Colonic mucosa (tissue), 4 donors: ENCODE measurements at regions of chr17 and their contacts with region 1.

Region 1: GRCh38 chr17:78128551-78129350 is at the start of gene TMC6:
- DNase-seq: peak; percentile 83
- H3K4me3 ChIP-seq: peak within 1 kb of the TSS; percentile 93
- H3K27ac ChIP-seq: peak within 1 kb of the TSS; percentile 92
- H3K4me1 ChIP-seq: peaks cover 31% of the 10 kb centered on the region
- H3K27me3 ChIP-seq: no peaks in the 10 kb centered on the region
- CTCF ChIP-seq: no peak
- total RNA-seq, gene TMC6: 108 to 159 TPM

Region 2: GRCh38 chr17:77863814-77864161 is 265.0 kb before region 1 on chr17:
- intact Hi-C with region 1: no loop called
- DNase-seq: peak; percentile 80
- H3K4me3 ChIP-seq: no peak overlapping the region
- H3K27ac ChIP-seq: peak overlapping the region; percentile 67
- H3K4me1 ChIP-seq: peaks cover 13% of the 10 kb centered on the region
- H3K27me3 ChIP-seq: no peaks in the 10 kb centered on the region
- CTCF ChIP-seq: no peak

Region 3: GRCh38 chr17:78032166-78032565 is 96.6 kb before region 1 on chr17:
- intact Hi-C with region 1: no loop called
- DNase-seq: no peak
- H3K4me3 ChIP-seq: no peak overlapping the region
- H3K27ac ChIP-seq: no peak overlapping the region
- H3K4me1 ChIP-seq: no peaks in the 10 kb centered on the region
- H3K27me3 ChIP-seq: no peaks in the 10 kb centered on the region
- CTCF ChIP-seq: no peak

Region 4: DNA sequence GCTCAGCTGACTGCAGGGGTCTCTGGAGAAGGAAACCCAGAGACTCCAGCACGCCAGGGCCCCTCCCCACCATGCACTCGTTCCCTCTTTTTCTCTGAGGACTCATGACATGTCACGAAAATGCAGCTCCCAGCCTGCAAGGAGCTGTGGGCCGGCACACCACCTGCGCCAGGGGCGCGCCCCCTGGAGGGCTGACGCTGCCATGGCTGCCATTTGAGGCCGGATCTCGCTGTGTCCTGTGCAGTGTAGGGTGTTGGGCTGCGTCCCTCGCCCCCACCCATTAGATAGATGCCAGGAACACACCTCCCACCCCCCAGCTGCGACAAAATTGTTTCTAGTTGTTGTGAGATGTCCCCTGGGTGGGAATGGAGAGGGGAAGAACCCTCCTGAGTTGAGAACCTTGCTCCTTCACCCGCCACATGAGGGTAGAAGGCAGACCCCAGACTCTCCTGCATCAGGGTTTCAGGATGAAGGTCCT is 47.8 kb after region 1 on chr17:
- intact Hi-C with region 1: loop called (anchors 5 kb)
- DNase-seq: peak; percentile 84
- H3K4me3 ChIP-seq: no peak overlapping the region
- H3K27ac ChIP-seq: peak overlapping the region; percentile 28
- H3K4me1 ChIP-seq: peaks cover 53% of the 10 kb centered on the region
- H3K27me3 ChIP-seq: no peaks in the 10 kb centered on the region
- CTCF ChIP-seq: peak; percentile 96

Region 5: DNA sequence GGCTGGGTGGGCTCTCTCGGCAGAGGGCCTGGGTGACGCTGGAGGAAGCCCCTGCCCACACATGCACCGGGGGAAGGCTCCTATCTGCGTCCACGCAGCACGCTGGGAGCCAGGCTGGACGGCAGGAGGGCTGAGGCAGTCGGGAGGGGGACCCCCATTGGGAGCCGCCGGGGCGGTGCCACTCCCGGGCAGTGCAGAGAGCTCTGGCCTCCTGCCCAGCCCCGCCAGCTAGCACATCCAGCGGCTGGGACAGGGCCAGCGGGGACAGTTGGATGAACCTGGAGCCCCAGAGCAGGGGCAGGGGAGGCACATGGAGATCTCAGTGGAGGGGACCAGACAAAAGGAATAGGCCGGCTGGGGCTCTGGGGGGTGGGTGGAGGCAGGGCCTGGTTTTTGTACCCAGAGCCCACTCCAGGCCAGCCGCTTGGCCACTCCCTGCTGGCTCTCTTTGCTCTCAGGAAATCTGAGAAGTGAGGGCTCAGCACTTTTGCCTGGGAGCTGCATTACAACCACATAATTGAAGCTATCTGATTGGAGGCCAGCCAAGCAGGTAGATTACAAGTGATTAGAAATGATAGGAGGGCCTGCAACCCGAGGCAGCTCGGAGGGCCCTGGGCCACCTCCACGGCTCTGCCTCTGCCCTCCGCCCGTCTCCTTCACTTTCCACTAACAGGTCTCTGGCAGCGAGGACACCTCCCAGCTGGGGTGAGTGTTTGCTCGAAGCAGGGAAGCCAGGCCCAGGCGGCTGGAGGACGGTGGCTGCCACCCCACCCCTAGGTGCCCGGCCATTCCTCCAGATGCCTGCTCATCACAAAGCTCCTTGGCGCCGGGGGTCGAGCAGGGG is 985.9 kb after region 1 on chr17:
- intact Hi-C with region 1: no loop called
- DNase-seq: peak; percentile 70
- H3K4me3 ChIP-seq: no peak overlapping the region
- H3K27ac ChIP-seq: no peak overlapping the region
- H3K4me1 ChIP-seq: peaks cover 3% of the 10 kb centered on the region
- H3K27me3 ChIP-seq: no peaks in the 10 kb centered on the region
- CTCF ChIP-seq: no peak